ENCODE measurements at regions of chr6 and their contacts with region 1.

Region 1: GRCh38 chr6:28218271-28219248 is 6.5 kb upstream of the ZSCAN9 start:
- DNase-seq: peak; percentile 84 to 90 (median 87)
- ATAC-seq: peak; percentile 80 to 98 (median 95)
- H3K4me3 ChIP-seq: peak overlapping the region; percentile 20 to 78 (median 70)
- H3K27ac ChIP-seq: peak overlapping the region in 11 of 12 donors; percentile 56 to 92 (median 73)
- H3K4me1 ChIP-seq: peaks cover 0 to 21% (median 11%) of the 10 kb centered on the region in 12 donors
- H3K27me3 ChIP-seq: peaks cover 0 to 50% (median 34%) of the 10 kb centered on the region in 9 donors
- CTCF ChIP-seq: peak in 1 of 12 donors; percentile 14
- POLR2A ChIP-seq: peak in 1 of 2 donors; percentile 20

Region 2: GRCh38 chr6:28080631-28081485 is 137.7 kb before region 1 on chr6:
- intact Hi-C with region 1: loop called in 1 of 10 experiments (anchors 5 kb)
- DNase-seq: peak; percentile 94 to 97 (median 95)
- ATAC-seq: peak; percentile 97 to 99 (median 99)
- H3K4me3 ChIP-seq: peak overlapping the region; percentile 56 to 94 (median 77)
- H3K27ac ChIP-seq: peak overlapping the region; percentile 59 to 91 (median 86)
- H3K4me1 ChIP-seq: peaks cover 0 to 16% (median 6%) of the 10 kb centered on the region in 12 donors
- H3K27me3 ChIP-seq: no peaks in the 10 kb centered on the region
- CTCF ChIP-seq: peak in 1 of 12 donors; percentile 6
- POLR2A ChIP-seq: peak in 1 of 2 donors; percentile 48

Region 3: GRCh38 chr6:28153546-28153945 is 65.0 kb before region 1 on chr6:
- intact Hi-C with region 1: loop called in 4 of 10 experiments (anchors 10 kb)
- DNase-seq: no peak
- ATAC-seq: no peak
- H3K4me3 ChIP-seq: no peak overlapping the region
- H3K27ac ChIP-seq: no peak overlapping the region
- H3K4me1 ChIP-seq: no peaks in the 10 kb centered on the region
- H3K27me3 ChIP-seq: no peaks in the 10 kb centered on the region
- CTCF ChIP-seq: no peak
- POLR2A ChIP-seq: no peak

Region 4: DNA sequence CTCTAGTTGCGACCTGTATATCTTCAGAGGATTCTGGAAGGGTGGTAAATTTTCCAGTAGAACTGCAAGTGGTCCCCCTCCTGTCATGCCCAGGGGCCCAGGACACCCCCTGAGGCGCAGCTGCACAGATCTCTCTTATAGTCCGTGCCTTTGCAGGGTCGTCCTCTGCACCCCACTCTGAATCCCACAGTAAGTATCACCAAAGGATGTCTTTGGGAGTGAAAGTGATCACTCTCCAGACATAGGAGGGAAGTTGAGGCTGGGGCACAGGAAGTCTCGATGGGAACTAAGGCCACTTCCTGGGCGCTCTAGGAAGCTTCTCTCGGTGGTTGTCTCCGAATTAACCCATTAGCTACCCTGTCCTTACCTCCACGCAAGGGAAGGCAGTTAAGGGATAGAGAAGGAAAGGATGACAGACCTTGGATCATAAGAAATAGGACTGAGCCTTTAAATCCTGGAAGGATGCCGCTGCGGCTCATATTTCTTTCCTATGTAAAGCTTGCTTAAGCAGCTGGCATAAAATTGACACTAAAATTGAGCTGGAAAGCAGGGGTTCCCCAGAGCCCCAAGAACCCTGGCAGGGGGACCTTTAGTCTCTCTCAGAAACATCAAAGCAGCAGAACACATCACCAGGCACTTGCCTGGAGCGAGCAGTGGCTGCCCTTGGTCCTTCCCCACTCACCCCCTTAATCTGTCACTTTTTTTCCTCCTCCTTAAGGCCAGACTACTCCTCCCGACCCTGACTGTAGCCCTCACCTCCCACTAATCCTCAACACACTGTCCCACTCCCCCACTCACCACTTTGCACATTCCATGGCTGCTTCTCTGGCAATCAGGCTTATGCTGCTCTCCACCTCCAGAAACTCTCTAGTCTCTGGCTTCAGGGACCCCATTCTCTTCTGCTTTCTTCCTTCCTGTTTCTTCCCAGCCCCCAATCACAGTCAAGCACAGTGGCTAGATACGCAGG is 33.7 kb after region 1 on chr6 and contains the start of gene ZKSCAN4:
- intact Hi-C with region 1: loop called in 1 of 10 experiments (anchors 5 kb)
- DNase-seq: peak; percentile 72 to 90 (median 84)
- ATAC-seq: peak; percentile 96 to 99 (median 98)
- H3K4me3 ChIP-seq: peak within 1 kb of the TSS; percentile 54 to 87 (median 78)
- H3K27ac ChIP-seq: peak within 1 kb of the TSS in 11 of 12 donors; percentile 9 to 83 (median 58)
- H3K4me1 ChIP-seq: peaks cover 6 to 32% (median 15%) of the 10 kb centered on the region in 12 donors
- H3K27me3 ChIP-seq: no peaks in the 10 kb centered on the region
- CTCF ChIP-seq: no peak
- POLR2A ChIP-seq: no peak
- total RNA-seq, gene ZKSCAN4: 2.1 to 5.0 (median 2.5) TPM